ENCODE measurements at regions of chr3 and their contacts with region 1.

Region 1: DNA sequence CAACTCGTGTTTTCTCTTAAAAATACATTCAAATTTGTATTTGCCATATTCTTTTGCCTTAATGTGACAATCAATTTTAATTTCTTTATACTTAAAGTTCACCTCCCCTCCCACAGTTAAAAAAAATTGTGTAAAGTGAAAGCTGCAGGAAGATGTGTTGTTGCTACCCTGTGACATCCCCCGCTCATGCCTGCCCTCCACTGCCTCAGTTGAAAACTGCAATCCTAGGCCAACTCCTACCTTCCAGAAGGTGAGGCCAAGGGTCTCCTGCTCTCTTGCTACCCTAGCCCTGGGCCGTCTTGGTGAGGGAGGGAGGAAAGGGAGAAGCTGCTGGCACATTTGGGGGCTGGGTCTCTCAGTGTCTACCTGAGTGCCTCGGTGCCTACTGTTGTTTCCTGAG is 57.0 kb upstream of the CMTM7 start:
- DNase-seq: peak; percentile 45
- H3K4me3 Mint-ChIP-seq: no peak overlapping the region
- H3K27ac Mint-ChIP-seq: no peak overlapping the region
- H3K4me1 Mint-ChIP-seq: peaks cover 55% of the 10 kb centered on the region
- H3K27me3 Mint-ChIP-seq: no peaks in the 10 kb centered on the region

Region 2: DNA sequence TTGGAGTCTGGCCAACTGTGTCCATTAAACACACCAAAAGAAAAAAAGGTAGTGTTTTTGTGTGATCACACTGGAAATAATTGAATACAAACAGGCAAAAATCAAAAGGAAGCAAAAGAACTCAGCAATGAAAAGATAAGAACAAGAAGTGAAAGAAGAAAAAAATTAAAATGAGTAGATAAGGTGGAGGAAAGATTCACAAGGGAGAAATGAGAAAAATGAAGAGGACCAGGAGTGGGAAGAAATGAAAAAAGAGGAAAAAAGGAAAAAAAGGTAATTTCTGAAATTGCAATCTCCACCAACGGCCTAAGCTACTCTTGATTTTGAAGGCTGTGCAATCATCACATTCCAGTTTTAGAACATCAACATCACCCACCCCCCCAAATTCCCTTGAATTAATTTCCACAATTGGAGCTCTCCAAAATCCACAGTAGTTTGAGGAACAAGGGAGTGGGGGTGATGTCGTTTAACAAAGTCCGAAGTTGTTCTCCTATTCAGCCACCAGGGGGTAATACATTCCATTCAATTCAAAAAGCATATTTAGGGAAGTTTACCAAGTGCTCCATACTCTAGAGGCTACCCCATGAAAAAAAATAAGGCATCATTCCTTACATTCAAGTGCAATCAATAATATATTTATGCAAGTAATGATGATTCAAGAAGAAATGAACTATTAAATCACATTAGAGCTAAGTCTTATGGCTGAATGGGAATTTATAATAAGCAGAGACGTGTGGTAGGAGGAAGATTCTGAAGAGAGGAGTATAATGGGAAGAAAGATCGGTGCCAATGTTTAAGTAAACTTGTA is 315.7 kb before region 1 on chr3:
- intact Hi-C with region 1: loop called (anchors 2 kb)
- DNase-seq: no peak
- H3K4me3 Mint-ChIP-seq: no peak overlapping the region
- H3K27ac Mint-ChIP-seq: no peak overlapping the region
- H3K4me1 Mint-ChIP-seq: no peaks in the 10 kb centered on the region
- H3K27me3 Mint-ChIP-seq: peaks cover 8% of the 10 kb centered on the region

Region 3: GRCh38 chr3:32285891-32286290 is 48.8 kb before region 1 on chr3:
- intact Hi-C with region 1: no loop called
- DNase-seq: no peak
- H3K4me3 Mint-ChIP-seq: no peak overlapping the region
- H3K27ac Mint-ChIP-seq: no peak overlapping the region
- H3K4me1 Mint-ChIP-seq: peaks cover 22% of the 10 kb centered on the region
- H3K27me3 Mint-ChIP-seq: no peaks in the 10 kb centered on the region

Region 4: DNA sequence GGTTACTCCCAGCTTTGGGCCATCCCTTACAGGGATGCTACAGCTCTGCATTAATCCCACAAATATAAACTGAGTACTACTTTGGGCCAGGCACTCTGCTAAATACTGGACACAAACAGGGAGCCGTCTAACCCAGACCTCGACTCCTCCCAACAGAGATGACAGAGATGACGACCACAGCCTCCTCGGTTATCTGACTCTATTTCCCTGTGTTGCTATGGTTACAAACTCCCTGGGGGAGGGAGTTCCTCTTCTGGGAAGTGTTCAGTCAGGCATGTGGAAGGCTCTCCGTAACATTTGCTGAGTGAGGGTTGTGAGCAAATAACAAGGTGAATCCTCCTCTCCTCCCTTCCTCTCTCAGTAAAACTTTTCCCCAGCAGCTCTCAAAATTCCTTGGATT is 50.3 kb after region 1 on chr3:
- intact Hi-C with region 1: no loop called
- DNase-seq: no peak
- H3K4me3 Mint-ChIP-seq: no peak overlapping the region
- H3K27ac Mint-ChIP-seq: no peak overlapping the region
- H3K4me1 Mint-ChIP-seq: peaks cover 12% of the 10 kb centered on the region
- H3K27me3 Mint-ChIP-seq: no peaks in the 10 kb centered on the region